ENCODE measurements at regions of chr6 and their contacts with region 1.

Region 1: DNA sequence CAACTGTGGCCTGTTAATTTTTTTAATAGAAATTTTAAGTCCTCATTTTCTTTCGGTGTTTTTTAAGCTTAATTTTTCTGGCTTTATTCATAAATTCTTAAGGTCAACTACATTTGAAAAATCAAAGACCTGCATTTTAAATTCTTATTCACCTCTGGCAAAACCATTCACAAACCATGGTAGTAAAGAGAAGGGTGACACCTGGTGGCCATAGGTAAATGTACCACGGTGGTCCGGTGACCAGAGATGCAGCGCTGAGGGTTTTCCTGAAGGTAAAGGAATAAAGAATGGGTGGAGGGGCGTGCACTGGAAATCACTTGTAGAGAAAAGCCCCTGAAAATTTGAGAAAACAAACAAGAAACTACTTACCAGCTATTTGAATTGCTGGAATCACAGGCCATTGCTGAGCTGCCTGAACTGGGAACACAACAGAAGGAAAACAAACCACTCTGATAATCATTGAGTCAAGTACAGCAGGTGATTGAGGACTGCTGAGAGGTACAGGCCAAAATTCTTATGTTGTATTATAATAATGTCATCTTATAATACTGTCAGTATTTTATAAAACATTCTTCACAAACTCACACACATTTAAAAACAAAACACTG is 10.1 kb downstream of the HFE start:
- DNase-seq: peak; percentile 45
- ATAC-seq: peak; percentile 79

Region 2: GRCh38 chr6:26065952-26066380 is 31.4 kb before region 1 on chr6:
- intact Hi-C with region 1: loop called (anchors 1 kb)
- DNase-seq: no peak
- ATAC-seq: peak; percentile 94

Region 3: DNA sequence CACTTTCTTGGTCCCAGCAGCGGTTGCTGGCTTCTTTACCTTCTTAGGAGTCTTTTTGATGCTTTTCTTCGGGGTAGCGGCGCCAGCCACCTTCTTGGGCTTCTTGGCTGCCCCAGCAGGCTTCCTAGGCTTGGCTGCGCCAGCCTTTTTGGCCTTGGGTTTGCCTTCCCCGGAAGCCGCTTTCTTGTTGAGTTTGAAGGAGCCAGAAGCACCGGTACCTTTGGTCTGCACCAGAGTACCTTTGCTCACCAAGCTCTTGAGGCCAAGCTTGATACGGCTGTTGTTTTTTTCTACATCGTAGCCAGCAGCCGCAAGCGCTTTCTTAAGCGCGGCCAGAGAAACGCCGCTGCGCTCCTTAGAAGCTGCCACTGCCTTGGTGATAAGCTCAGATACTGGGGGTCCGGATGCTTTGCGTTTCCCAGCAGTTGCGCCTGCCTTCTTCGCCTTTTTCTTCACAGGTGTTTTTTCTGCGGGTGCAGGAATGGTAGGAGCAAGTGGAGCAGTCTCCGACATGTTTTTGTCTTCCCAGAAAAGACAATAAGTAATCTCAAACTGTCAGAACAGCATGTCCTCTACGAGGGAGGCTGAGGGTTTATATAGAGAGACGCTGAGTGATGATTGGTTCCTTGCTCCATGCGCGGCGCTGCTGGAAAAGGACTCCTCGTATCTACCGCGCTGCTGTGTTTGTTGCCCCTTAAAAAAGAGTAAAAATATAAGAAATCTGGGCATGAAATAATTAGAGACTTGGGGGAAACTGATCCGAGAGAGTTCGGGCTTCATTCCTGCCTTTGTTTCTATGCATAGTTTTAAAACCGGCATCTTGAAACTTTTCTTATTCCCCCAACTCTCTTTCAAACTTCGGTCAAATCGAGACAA is 137.3 kb after region 1 on chr6:
- intact Hi-C with region 1: no loop called
- DNase-seq: peak; percentile 81
- ATAC-seq: peak; percentile 77

Measured in Right ventricle myocardium inferior (tissue), 1 donor.